Activated naive CD4-positive, alpha-beta T cell treated with anti-CD3 and anti-CD28 coated beads, Interleukin-2, amount 10 ng/mL, durations not matched to agents 7 days and 5 days (primary cell): ENCODE measurements at regions of chr11 and their contacts with region 1.

Region 1: DNA sequence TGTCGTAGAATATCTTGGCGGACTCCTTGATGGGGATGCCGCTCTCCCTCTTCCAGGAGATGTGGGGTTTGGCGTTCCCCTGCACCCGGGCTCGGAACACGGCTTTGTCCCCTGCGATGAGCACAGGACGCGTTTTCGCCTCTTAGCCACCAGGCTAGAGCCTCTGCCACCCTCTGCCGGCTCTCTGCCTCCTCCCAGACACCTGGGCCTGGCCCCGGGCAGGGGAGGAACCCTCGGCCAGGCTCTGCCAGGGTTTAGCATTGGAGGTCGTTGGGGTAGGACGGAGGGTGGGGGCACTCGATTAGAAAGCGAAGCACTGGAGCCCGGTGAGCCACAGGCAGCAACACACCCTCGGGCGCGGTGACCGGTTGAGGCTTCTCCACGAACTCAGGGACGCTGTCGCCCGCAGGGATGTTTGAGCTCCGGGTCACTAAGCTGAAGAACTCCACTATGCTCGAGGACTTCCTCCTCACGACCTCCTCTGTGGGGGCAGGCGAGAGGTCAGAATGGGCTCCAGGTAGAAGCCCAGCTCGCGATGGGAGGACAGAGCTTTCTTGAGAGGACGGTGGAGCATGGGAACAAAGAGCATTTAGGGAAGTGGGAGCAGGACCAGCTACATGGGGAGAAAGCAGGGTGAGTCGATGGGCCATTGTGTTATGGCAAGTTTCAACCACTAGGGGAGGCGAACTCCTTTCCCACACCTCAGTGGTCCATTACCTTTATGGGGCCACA is 4.3 kb downstream of the IGSF22 start:
- DNase-seq: peak; percentile 66
- H3K4me3 Mint-ChIP-seq: peak overlapping the region; percentile 67
- H3K27ac Mint-ChIP-seq: no peak overlapping the region
- H3K4me1 Mint-ChIP-seq: peaks cover 8% of the 10 kb centered on the region
- H3K27me3 Mint-ChIP-seq: peaks cover 62% of the 10 kb centered on the region

Region 2: GRCh38 chr11:18706330-18707243 is 15.1 kb before region 1 on chr11:
- CTCF ChIA-PET with region 1: interaction called, 31 read pairs
- DNase-seq: peak; percentile 67
- H3K4me3 Mint-ChIP-seq: peak overlapping the region; percentile 72
- H3K27ac Mint-ChIP-seq: no peak overlapping the region
- H3K4me1 Mint-ChIP-seq: peaks cover 20% of the 10 kb centered on the region
- H3K27me3 Mint-ChIP-seq: peaks cover 72% of the 10 kb centered on the region

Region 3: GRCh38 chr11:18731949-18732821 is 10.5 kb after region 1 on chr11:
- CTCF ChIA-PET with region 1: interaction called, 49 read pairs
- DNase-seq: peak; percentile 77
- H3K4me3 Mint-ChIP-seq: no peak overlapping the region
- H3K27ac Mint-ChIP-seq: no peak overlapping the region
- H3K4me1 Mint-ChIP-seq: peaks cover 3% of the 10 kb centered on the region
- H3K27me3 Mint-ChIP-seq: peaks cover 10% of the 10 kb centered on the region